ENCODE measurements at regions of chr2 and their contacts with region 1.

Region 1: DNA sequence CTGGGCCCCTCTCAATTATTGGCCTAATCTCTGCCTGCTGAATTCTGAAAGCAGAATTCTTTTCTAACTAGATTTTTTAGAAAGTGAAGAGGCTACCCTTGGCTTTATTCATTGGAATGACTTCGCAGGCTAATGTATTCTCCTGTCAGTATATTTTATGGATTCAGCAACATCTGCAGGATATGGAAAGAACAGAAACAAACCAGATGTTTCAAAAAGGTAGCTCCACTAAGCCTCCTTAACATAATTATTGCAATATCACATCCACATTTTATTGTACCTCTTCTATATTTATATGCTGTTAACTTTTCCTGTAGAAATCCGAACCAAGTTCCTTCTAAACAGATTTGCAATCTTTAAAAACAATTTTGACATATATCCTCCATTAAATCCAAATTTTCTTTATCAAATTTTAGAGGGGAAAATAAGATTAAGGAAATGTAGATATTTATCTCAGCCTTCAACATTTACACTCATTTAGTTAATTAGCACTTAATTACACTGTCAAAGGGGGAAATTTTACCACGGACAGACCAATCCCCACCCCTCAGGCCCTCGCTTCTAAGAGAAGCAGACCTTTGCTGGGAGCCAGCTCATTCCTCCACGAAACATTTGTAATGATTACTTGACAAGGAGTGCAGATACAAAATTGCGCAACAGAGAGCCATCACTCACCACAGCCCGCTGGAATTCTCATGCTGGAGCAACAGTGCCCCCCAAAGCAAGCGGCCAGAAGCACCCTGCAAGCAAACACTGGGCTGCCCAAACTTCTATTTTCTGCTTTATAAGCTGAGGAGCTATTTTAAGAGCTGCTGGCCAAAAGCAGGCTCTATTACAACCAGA is 253.4 kb downstream of the ETAA1 start:
- DNase-seq: peak; percentile 93
- H3K4me3 ChIP-seq: no peak overlapping the region
- H3K27ac ChIP-seq: peak overlapping the region; percentile 53
- H3K27me3 ChIP-seq: no peaks in the 10 kb centered on the region
- CTCF ChIP-seq: peak; percentile 96

Region 2: GRCh38 chr2:67215214-67216055 is 435.1 kb before region 1 on chr2:
- CTCF ChIA-PET with region 1: interaction called, 13 read pairs
- POLR2A ChIA-PET with region 1: no interaction called
- DNase-seq: peak; percentile 77
- H3K4me3 ChIP-seq: no peak overlapping the region
- H3K27ac ChIP-seq: peak overlapping the region; percentile 82
- H3K27me3 ChIP-seq: no peaks in the 10 kb centered on the region
- CTCF ChIP-seq: peak; percentile 91

Region 3: DNA sequence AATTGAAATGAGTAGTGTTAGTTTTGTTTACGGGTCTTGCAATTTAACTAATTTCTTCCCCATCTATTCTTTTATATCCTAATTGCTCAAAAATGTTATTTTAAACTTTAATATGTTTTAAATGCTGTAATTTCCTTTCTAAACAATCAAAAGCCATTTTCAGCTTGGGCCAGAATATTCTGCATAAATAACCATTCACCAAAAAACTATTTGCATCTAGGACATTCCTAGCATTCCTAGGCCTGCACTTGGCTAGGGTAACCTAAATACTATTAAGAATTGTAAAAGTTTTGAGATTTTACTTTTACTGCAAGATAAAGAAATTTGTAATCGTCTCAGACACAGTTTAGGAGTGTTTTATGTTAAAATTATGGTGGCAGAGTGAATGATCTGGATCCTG is 261.2 kb before region 1 on chr2:
- CTCF ChIA-PET with region 1: interaction called, 12 read pairs
- POLR2A ChIA-PET with region 1: no interaction called
- DNase-seq: peak; percentile 30
- H3K4me3 ChIP-seq: no peak overlapping the region
- H3K27ac ChIP-seq: peak overlapping the region; percentile 49
- H3K27me3 ChIP-seq: no peaks in the 10 kb centered on the region
- CTCF ChIP-seq: no peak

Region 4: GRCh38 chr2:67476809-67477790 is 173.4 kb before region 1 on chr2:
- CTCF ChIA-PET with region 1: interaction called, 39 read pairs
- POLR2A ChIA-PET with region 1: no interaction called
- DNase-seq: no peak
- H3K4me3 ChIP-seq: no peak overlapping the region
- H3K27ac ChIP-seq: no peak overlapping the region
- H3K27me3 ChIP-seq: no peaks in the 10 kb centered on the region
- CTCF ChIP-seq: peak; percentile 66

Region 5: DNA sequence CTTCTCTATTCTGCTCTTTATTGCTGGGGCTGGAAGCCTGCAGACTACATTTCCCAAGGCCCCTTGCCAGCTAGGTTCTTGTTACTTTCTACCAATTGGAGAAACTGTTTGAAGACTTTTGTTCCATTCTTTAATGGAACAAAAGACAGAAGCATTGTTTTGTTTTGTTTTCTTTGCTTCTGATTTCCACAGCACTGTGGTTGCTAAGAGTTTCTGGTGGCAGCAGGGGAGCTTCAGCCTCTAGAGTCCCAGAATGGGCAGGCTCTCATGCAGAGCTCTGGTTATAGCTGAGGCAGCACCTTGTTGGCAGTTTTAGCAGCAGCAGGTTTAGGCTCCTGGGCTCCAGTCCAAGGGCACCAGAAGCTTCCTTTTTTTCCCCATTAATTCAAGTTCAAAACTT is 19.0 kb before region 1 on chr2:
- CTCF ChIA-PET with region 1: no interaction called
- POLR2A ChIA-PET with region 1: no interaction called
- DNase-seq: no peak
- H3K4me3 ChIP-seq: no peak overlapping the region
- H3K27ac ChIP-seq: no peak overlapping the region
- H3K27me3 ChIP-seq: no peaks in the 10 kb centered on the region
- CTCF ChIP-seq: no peak

Region 6: GRCh38 chr2:67840460-67841068 is 190.1 kb after region 1 on chr2:
- CTCF ChIA-PET with region 1: interaction called, 44 read pairs
- POLR2A ChIA-PET with region 1: interaction called, 5 read pairs
- DNase-seq: peak; percentile 59
- H3K4me3 ChIP-seq: no peak overlapping the region
- H3K27ac ChIP-seq: no peak overlapping the region
- H3K27me3 ChIP-seq: no peaks in the 10 kb centered on the region
- CTCF ChIP-seq: peak; percentile 95

Region 7: GRCh38 chr2:68031542-68032160 is 381.1 kb after region 1 on chr2:
- CTCF ChIA-PET with region 1: interaction called, 30 read pairs
- POLR2A ChIA-PET with region 1: no interaction called
- DNase-seq: peak; percentile 15
- H3K4me3 ChIP-seq: no peak overlapping the region
- H3K27ac ChIP-seq: no peak overlapping the region
- H3K27me3 ChIP-seq: no peaks in the 10 kb centered on the region
- CTCF ChIP-seq: peak; percentile 69